GM12878 (cell line): ENCODE measurements at regions of chr10 and their contacts with region 1.

Region 1: GRCh38 chr10:70146489-70147258 is at the start of gene TYSND1:
- DNase-seq: peak; percentile 91
- ATAC-seq: peak; percentile 92
- H3K4me3 ChIP-seq: peak within 1 kb of the TSS; percentile 88
- H3K27ac ChIP-seq: peak within 1 kb of the TSS; percentile 85
- H3K4me1 ChIP-seq: peaks cover 3% of the 10 kb centered on the region; the same call in 1 of the 2 replicates
- H3K27me3 ChIP-seq: no peaks in the 10 kb centered on the region
- CTCF ChIP-seq: peak; percentile 89 to 95 (median 92)
- EP300 ChIP-seq: no peak
- POLR2A ChIP-seq: peak; percentile 90
- RAD21 ChIP-seq: peak; percentile 67
- polyA plus RNA-seq, gene TYSND1: 1.9 to 4.5 TPM

Region 2: DNA sequence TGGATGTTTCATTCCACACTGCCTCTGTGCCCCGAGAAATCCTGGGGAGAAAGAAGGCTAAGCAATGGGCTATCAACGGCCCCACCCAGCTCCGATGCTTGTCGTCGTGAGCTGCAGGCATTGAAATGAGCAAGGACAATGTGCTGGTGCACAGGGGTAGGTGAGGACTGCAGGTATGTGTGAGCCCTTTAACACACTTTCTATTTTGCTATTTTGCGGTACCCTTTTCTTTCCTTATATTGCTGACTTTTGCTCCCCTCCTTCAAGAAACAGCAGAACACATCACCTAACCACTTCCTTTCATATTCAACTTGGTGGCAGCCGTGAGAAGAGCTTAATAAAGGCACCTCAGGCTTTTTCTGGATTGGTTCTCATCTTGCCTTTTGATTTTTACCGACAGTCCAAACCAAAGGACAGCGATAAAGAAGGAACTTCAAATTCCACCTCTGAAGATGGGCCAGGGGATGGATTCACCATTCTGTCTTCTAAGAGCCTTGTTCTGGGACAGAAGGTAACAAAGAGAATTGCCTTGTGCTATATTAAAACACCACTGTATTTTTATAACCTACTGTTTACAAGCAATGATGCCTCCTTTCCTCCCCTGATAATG is 53.2 kb before region 1 on chr10:
- CTCF ChIA-PET with region 1: interaction called, 20 read pairs
- POLR2A ChIA-PET with region 1: no interaction called
- RAD21 ChIA-PET with region 1: interaction called, 16 read pairs
- SMC1A ChIA-PET with region 1: interaction called, 5 read pairs
- in situ Hi-C with region 1: no loop called
- intact Hi-C with region 1: no loop called
- DNase-seq: no peak
- ATAC-seq: peak; percentile 41
- H3K4me3 ChIP-seq: no peak overlapping the region
- H3K27ac ChIP-seq: no peak overlapping the region
- H3K4me1 ChIP-seq: peaks cover 7% of the 10 kb centered on the region; the same call in 1 of the 2 replicates
- H3K27me3 ChIP-seq: no peaks in the 10 kb centered on the region; a peak in 1 of 4 replicates
- CTCF ChIP-seq: no peak
- EP300 ChIP-seq: no peak
- POLR2A ChIP-seq: no peak
- RAD21 ChIP-seq: no peak

Region 3: GRCh38 chr10:70132098-70133029 is 14.3 kb before region 1 on chr10 and contains the start of gene AIFM2:
- CTCF ChIA-PET with region 1: interaction called, 18 read pairs
- POLR2A ChIA-PET with region 1: interaction called, 8 read pairs
- RAD21 ChIA-PET with region 1: interaction called, 3 read pairs
- SMC1A ChIA-PET with region 1: interaction called, 9 read pairs
- in situ Hi-C with region 1: no loop called
- intact Hi-C with region 1: no loop called
- DNase-seq: no peak
- ATAC-seq: peak; percentile 91
- H3K4me3 ChIP-seq: peak within 1 kb of the TSS; percentile 83
- H3K27ac ChIP-seq: peak within 1 kb of the TSS; percentile 89
- H3K4me1 ChIP-seq: peaks cover 12% of the 10 kb centered on the region
- H3K27me3 ChIP-seq: no peaks in the 10 kb centered on the region
- CTCF ChIP-seq: peak in 2 of 3 experiments; percentile 8 to 11; a peak in 2 of 6 replicates
- EP300 ChIP-seq: 0 out of 4 replicates have a peak, but pooled peaks of 1 of the 2 experiments have one; percentile 25
- POLR2A ChIP-seq: peak; percentile 88
- RAD21 ChIP-seq: no peak
- polyA plus RNA-seq, gene AIFM2: 4.5 to 8.0 TPM

Region 4: GRCh38 chr10:70197235-70197945 is 50.7 kb after region 1 on chr10:
- CTCF ChIA-PET with region 1: interaction called, 11 read pairs
- POLR2A ChIA-PET with region 1: no interaction called
- RAD21 ChIA-PET with region 1: interaction called, 6 read pairs
- SMC1A ChIA-PET with region 1: interaction called, 13 read pairs
- in situ Hi-C with region 1: no loop called
- intact Hi-C with region 1: no loop called
- DNase-seq: no peak
- ATAC-seq: no peak
- H3K4me3 ChIP-seq: no peak overlapping the region
- H3K27ac ChIP-seq: no peak overlapping the region
- H3K4me1 ChIP-seq: no peaks in the 10 kb centered on the region; the same call in 1 of the 2 replicates
- H3K27me3 ChIP-seq: no peaks in the 10 kb centered on the region
- CTCF ChIP-seq: no peak
- EP300 ChIP-seq: no peak
- POLR2A ChIP-seq: no peak
- RAD21 ChIP-seq: no peak

Region 5: GRCh38 chr10:70267161-70267933 is 120.7 kb after region 1 on chr10:
- CTCF ChIA-PET with region 1: interaction called, 11 read pairs
- POLR2A ChIA-PET with region 1: interaction called, 3 read pairs
- RAD21 ChIA-PET with region 1: interaction called, 9 read pairs
- SMC1A ChIA-PET with region 1: interaction called, 8 read pairs
- in situ Hi-C with region 1: no loop called
- intact Hi-C with region 1: no loop called
- DNase-seq: no peak
- ATAC-seq: peak; percentile 35
- H3K4me3 ChIP-seq: no peak overlapping the region
- H3K27ac ChIP-seq: no peak overlapping the region
- H3K4me1 ChIP-seq: peaks cover 16% of the 10 kb centered on the region
- H3K27me3 ChIP-seq: no peaks in the 10 kb centered on the region
- CTCF ChIP-seq: peak; percentile 10 to 41 (median 27); a peak in 4 of 6 replicates
- EP300 ChIP-seq: no peak
- POLR2A ChIP-seq: no peak
- RAD21 ChIP-seq: no peak

Region 6: DNA sequence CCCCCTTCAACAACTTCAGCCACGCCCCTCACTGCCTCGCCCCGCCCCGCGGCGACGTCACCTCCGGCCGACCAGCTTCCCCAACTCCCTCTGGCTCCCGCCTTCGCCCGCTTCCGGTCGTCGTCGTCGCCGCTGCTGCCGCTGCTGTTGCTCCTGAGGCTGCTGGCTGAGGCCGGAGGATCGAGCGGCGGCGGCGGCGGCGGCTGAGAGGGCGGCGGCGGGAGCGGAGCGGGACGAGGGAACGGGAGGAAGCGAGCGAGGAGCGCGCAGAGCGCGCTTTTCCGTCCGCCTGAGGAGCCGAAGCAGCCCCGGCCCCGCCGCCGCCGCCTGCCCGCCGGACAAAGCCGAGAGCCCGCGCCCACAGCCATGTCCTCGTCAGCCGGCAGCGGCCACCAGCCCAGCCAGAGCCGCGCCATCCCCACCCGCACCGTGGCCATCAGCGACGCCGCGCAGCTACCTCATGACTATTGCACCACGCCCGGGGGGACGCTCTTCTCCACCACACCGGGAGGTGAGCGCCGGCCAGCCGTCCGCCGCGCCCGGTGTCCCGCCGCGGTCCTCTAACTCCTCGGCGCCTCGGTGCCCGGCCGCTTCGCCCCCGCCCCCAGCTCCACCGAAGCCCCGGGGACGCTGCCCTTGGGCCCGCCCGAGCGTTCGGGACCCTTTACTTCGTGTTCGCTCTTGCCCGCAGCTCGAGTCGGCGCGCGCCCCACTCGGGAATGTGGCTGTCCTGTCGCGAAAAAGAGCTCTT is 257.5 kb after region 1 on chr10 and contains the start of gene EIF4EBP2:
- CTCF ChIA-PET with region 1: interaction called, 14 read pairs
- POLR2A ChIA-PET with region 1: interaction called, 9 read pairs
- RAD21 ChIA-PET with region 1: no interaction called
- SMC1A ChIA-PET with region 1: no interaction called
- in situ Hi-C with region 1: no loop called
- intact Hi-C with region 1: no loop called
- DNase-seq: peak; percentile 89
- ATAC-seq: peak; percentile 91
- H3K4me3 ChIP-seq: peak within 1 kb of the TSS; percentile 79
- H3K27ac ChIP-seq: peak within 1 kb of the TSS; percentile 73
- H3K4me1 ChIP-seq: peaks cover 14% of the 10 kb centered on the region
- H3K27me3 ChIP-seq: no peaks in the 10 kb centered on the region
- CTCF ChIP-seq: no peak
- EP300 ChIP-seq: no peak
- POLR2A ChIP-seq: peak; percentile 96
- RAD21 ChIP-seq: no peak
- polyA plus RNA-seq, gene EIF4EBP2: 14.4 to 20.4 TPM